ENCODE measurements at regions of chr9 and their contacts with region 1.

Region 1: GRCh38 chr9:98707166-98708102 is 1.3 kb downstream of the GABBR2 start:
- DNase-seq: peak; percentile 57
- H3K4me3 Mint-ChIP-seq: peak overlapping the region; percentile 43
- H3K27ac Mint-ChIP-seq: no peak overlapping the region
- H3K4me1 Mint-ChIP-seq: no peaks in the 10 kb centered on the region
- H3K27me3 Mint-ChIP-seq: peaks cover 87% of the 10 kb centered on the region
- CTCF ChIP-seq: peak; percentile 6

Region 2: GRCh38 chr9:98502360-98503325 is 204.8 kb before region 1 on chr9:
- CTCF ChIA-PET with region 1: no interaction called
- intact Hi-C with region 1: no loop called
- DNase-seq: no peak
- H3K4me3 Mint-ChIP-seq: no peak overlapping the region
- H3K27ac Mint-ChIP-seq: no peak overlapping the region
- H3K4me1 Mint-ChIP-seq: no peaks in the 10 kb centered on the region
- H3K27me3 Mint-ChIP-seq: peaks cover 70% of the 10 kb centered on the region
- CTCF ChIP-seq: no peak

Region 3: GRCh38 chr9:98575379-98576346 is 131.8 kb before region 1 on chr9:
- CTCF ChIA-PET with region 1: no interaction called
- intact Hi-C with region 1: loop called (anchors 10 kb)
- DNase-seq: peak; percentile 12
- H3K4me3 Mint-ChIP-seq: no peak overlapping the region
- H3K27ac Mint-ChIP-seq: peak overlapping the region; percentile 55
- H3K4me1 Mint-ChIP-seq: peaks cover 13% of the 10 kb centered on the region
- H3K27me3 Mint-ChIP-seq: peaks cover 64% of the 10 kb centered on the region
- CTCF ChIP-seq: no peak